RWPE1 (cell line): ENCODE measurements at regions of chr6 and their contacts with region 1.

Region 1: GRCh38 chr6:71510057-71510713 is 221.6 kb downstream of the OGFRL1 start:
- DNase-seq: peak; percentile 53
- H3K27ac ChIP-seq: no peak overlapping the region
- CTCF ChIP-seq: peak; percentile 58

Region 2: DNA sequence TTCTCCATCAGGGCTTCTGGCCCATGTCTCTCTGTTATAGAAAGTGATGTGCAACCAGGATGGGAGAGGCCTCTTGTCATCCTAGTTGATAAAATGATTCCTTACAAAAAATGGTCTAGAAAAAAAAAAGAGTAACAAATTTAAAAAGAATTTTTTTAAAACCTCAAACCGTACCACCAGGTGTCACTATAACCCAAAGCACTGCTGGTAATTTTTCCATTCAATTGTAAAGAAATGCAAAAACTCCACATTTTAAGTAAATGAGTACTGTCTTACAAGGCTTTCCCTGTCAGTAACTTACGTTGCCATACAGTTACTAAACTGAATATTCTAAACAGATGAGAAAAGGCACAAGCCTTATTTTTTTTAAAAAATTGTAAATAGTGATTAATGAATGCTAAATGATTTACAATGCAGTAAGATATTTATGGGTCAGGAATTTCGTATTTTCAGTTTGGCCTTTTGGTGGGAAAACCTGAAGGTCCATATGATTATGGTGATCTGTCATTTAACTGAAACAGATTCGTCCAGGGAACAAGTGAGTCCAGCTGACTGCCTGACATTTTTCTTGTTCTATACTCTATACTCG is 126.2 kb before region 1 on chr6:
- CTCF ChIA-PET with region 1: interaction called, 11 read pairs
- POLR2A ChIA-PET with region 1: no interaction called
- DNase-seq: no peak
- H3K27ac ChIP-seq: no peak overlapping the region
- CTCF ChIP-seq: peak; percentile 68

Region 3: GRCh38 chr6:71433441-71433840 is 76.7 kb before region 1 on chr6:
- CTCF ChIA-PET with region 1: no interaction called
- POLR2A ChIA-PET with region 1: no interaction called
- DNase-seq: no peak
- H3K27ac ChIP-seq: no peak overlapping the region
- CTCF ChIP-seq: no peak